ENCODE measurements at regions of chr17 and their contacts with region 1.

Region 1: DNA sequence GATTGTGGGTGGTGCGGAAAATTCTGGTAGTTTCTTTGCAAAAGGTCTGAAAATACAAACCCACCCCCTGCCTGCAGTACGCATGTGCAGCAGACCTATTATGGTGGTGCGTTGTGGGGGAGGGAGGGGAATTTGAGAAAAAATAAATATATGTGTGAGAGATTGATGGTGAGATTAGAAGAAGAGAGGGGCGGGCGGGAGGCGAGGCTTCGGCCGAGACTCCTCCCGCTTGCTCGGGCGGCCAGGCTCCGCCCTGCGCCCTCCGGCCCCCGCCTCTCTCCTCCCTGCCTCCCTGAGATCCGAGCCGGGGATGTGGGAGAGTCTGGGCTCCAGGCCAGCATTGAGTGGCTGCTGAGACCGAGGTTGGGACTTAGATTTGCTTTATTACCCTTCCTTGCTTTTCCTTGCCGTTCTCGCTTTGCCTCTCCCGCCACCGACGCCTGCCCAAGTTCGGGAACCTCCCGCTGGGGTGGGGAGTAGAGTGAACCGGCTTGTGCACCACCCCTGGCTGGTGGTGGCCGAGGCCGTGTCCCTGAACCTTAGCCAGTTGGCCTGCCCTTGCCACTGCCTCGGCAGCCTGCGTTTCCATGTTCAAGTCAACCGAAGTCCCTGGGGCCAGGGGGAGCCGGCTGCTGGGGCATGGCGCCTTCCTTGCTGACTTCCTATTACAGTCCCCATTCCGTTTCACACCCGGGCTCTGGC is 956 bp upstream of the CHD3 start:
- DNase-seq: peak; percentile 41 to 96 (median 93)
- ATAC-seq: peak; percentile 83
- H3K4me3 ChIP-seq: peak overlapping the region; percentile 61
- H3K4me3 Mint-ChIP-seq: no peak overlapping the region
- H3K27ac ChIP-seq: peak overlapping the region; percentile 91
- H3K27ac Mint-ChIP-seq: no peak overlapping the region
- H3K4me1 ChIP-seq: peaks cover 28 to 29% of the 10 kb centered on the region in 2 donors
- H3K4me1 Mint-ChIP-seq: peaks cover 0 to 17% (median 8%) of the 10 kb centered on the region in 7 donors
- H3K27me3 ChIP-seq: no peaks in the 10 kb centered on the region
- H3K27me3 Mint-ChIP-seq: no peaks in the 10 kb centered on the region

Region 2: GRCh38 chr17:7348478-7349242 is 539.0 kb before region 1 on chr17:
- CTCF ChIA-PET with region 1: no interaction called
- POLR2A ChIA-PET with region 1: no interaction called
- intact Hi-C with region 1: no loop called
- DNase-seq: no peak
- ATAC-seq: no peak
- H3K4me3 ChIP-seq: no peak overlapping the region
- H3K4me3 Mint-ChIP-seq: peak overlapping the region in 4 of 10 donors; percentile 6 to 45 (median 20)
- H3K27ac ChIP-seq: peak overlapping the region; percentile 44
- H3K27ac Mint-ChIP-seq: peak overlapping the region in 6 of 9 donors; percentile 33 to 86 (median 70)
- H3K4me1 ChIP-seq: peaks cover 7 to 19% of the 10 kb centered on the region in 2 donors
- H3K4me1 Mint-ChIP-seq: peaks cover 16 to 53% (median 41%) of the 10 kb centered on the region in 7 donors
- H3K27me3 ChIP-seq: no peaks in the 10 kb centered on the region
- H3K27me3 Mint-ChIP-seq: no peaks in the 10 kb centered on the region

Region 3: GRCh38 chr17:7834962-7835813 is 52.4 kb before region 1 on chr17:
- CTCF ChIA-PET with region 1: no interaction called
- POLR2A ChIA-PET with region 1: interaction called, 5 read pairs
- intact Hi-C with region 1: loop called (anchors 1 to 2 kb)
- DNase-seq: peak; percentile 76 to 97 (median 95)
- ATAC-seq: peak; percentile 70
- H3K4me3 ChIP-seq: peak overlapping the region; percentile 96
- H3K4me3 Mint-ChIP-seq: peak overlapping the region; percentile 91 to 99 (median 96)
- H3K27ac ChIP-seq: peak overlapping the region; percentile 96
- H3K27ac Mint-ChIP-seq: peak overlapping the region; percentile 95 to 100 (median 99)
- H3K4me1 ChIP-seq: peaks cover 29 to 38% of the 10 kb centered on the region in 2 donors
- H3K4me1 Mint-ChIP-seq: peaks cover 28 to 60% (median 44%) of the 10 kb centered on the region in 7 donors
- H3K27me3 ChIP-seq: no peaks in the 10 kb centered on the region
- H3K27me3 Mint-ChIP-seq: peaks cover 0 to 28% (median 0%) of the 10 kb centered on the region in 5 donors

Region 4: GRCh38 chr17:7856883-7857723 is 30.5 kb before region 1 on chr17 and contains the start of gene NAA38:
- CTCF ChIA-PET with region 1: interaction called, 6 read pairs
- POLR2A ChIA-PET with region 1: interaction called, 14 read pairs
- intact Hi-C with region 1: loop called (anchors 1 kb)
- DNase-seq: peak; percentile 81 to 99 (median 97)
- ATAC-seq: peak; percentile 87
- H3K4me3 ChIP-seq: peak within 1 kb of the TSS; percentile 70
- H3K4me3 Mint-ChIP-seq: no peak within 1 kb of the TSS
- H3K27ac ChIP-seq: peak within 1 kb of the TSS; percentile 83
- H3K27ac Mint-ChIP-seq: no peak within 1 kb of the TSS
- H3K4me1 ChIP-seq: peaks cover 25 to 26% of the 10 kb centered on the region in 2 donors
- H3K4me1 Mint-ChIP-seq: peaks cover 0 to 16% (median 5%) of the 10 kb centered on the region in 7 donors
- H3K27me3 ChIP-seq: no peaks in the 10 kb centered on the region
- H3K27me3 Mint-ChIP-seq: no peaks in the 10 kb centered on the region
- total RNA-seq, gene NAA38: 22.1 to 63.8 (median 24.9) TPM

Region 5: GRCh38 chr17:7867881-7868329 is 19.7 kb before region 1 on chr17:
- CTCF ChIA-PET with region 1: interaction called, 12 read pairs
- POLR2A ChIA-PET with region 1: interaction called, 12 read pairs
- intact Hi-C with region 1: loop called in 1 of 2 experiments (anchors 1 kb)
- DNase-seq: no peak
- ATAC-seq: peak; percentile 79
- H3K4me3 ChIP-seq: peak overlapping the region; percentile 2
- H3K4me3 Mint-ChIP-seq: peak overlapping the region; percentile 46 to 83 (median 70)
- H3K27ac ChIP-seq: peak overlapping the region; percentile 49
- H3K27ac Mint-ChIP-seq: peak overlapping the region; percentile 53 to 92 (median 87)
- H3K4me1 ChIP-seq: peaks cover 16 to 20% of the 10 kb centered on the region in 2 donors
- H3K4me1 Mint-ChIP-seq: peaks cover 23 to 46% (median 43%) of the 10 kb centered on the region in 7 donors
- H3K27me3 ChIP-seq: no peaks in the 10 kb centered on the region
- H3K27me3 Mint-ChIP-seq: no peaks in the 10 kb centered on the region

Region 6: GRCh38 chr17:7922845-7923628 is 35.4 kb after region 1 on chr17:
- CTCF ChIA-PET with region 1: interaction called, 3 read pairs
- POLR2A ChIA-PET with region 1: interaction called, 4 read pairs
- intact Hi-C with region 1: loop called in 1 of 2 experiments (anchors 2 kb)
- DNase-seq: peak; percentile 66 to 88 (median 84)
- ATAC-seq: peak; percentile 99
- H3K4me3 ChIP-seq: peak overlapping the region; percentile 49
- H3K4me3 Mint-ChIP-seq: peak overlapping the region; percentile 76 to 91 (median 87)
- H3K27ac ChIP-seq: peak overlapping the region; percentile 85
- H3K27ac Mint-ChIP-seq: peak overlapping the region; percentile 76 to 98 (median 97)
- H3K4me1 ChIP-seq: peaks cover 5 to 13% of the 10 kb centered on the region in 2 donors
- H3K4me1 Mint-ChIP-seq: peaks cover 10 to 29% (median 22%) of the 10 kb centered on the region in 7 donors
- H3K27me3 ChIP-seq: no peaks in the 10 kb centered on the region
- H3K27me3 Mint-ChIP-seq: no peaks in the 10 kb centered on the region